HEK293 (cell line): ENCODE measurements at regions of chr12 and their contacts with region 1.

Region 1: GRCh38 chr12:117367011-117367638 is 5.7 kb upstream of the NOS1 start:
- H3K4me3 ChIP-seq: no peak overlapping the region
- H3K27ac ChIP-seq: no peak overlapping the region
- H3K4me1 ChIP-seq: no peaks in the 10 kb centered on the region
- CTCF ChIP-seq: peak; percentile 60

Region 2: DNA sequence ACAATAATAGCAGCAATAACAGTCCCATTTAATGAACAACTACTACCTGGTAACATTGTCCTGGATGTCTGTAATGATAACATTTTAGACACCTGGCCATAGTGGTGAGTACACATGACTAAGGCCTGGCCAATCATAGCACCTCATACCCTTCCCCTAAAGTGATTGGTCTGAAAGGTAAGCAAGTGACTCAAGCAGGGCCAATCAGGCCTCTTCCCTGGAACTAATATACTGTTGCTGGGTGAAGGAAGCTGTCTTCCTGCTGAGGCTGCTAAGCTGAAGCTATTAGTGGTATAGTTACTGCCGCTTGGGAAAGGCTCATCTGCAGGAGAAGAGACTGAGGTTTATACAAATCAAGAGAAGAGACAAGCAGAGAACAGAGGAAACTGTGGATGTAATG is 13.0 kb after region 1 on chr12:
- CTCF ChIA-PET with region 1: interaction called, 10 read pairs
- POLR2A ChIA-PET with region 1: no interaction called
- H3K4me3 ChIP-seq: no peak overlapping the region
- H3K27ac ChIP-seq: no peak overlapping the region
- H3K4me1 ChIP-seq: no peaks in the 10 kb centered on the region
- CTCF ChIP-seq: no peak

Region 3: GRCh38 chr12:117671734-117672133 is 304.6 kb after region 1 on chr12:
- CTCF ChIA-PET with region 1: interaction called, 16 read pairs
- POLR2A ChIA-PET with region 1: no interaction called
- H3K4me3 ChIP-seq: no peak overlapping the region
- H3K27ac ChIP-seq: no peak overlapping the region
- H3K4me1 ChIP-seq: peaks cover 2% of the 10 kb centered on the region; the same call in 1 of the 2 replicates
- CTCF ChIP-seq: no peak; the same call in 1 of the 2 replicates

Region 4: DNA sequence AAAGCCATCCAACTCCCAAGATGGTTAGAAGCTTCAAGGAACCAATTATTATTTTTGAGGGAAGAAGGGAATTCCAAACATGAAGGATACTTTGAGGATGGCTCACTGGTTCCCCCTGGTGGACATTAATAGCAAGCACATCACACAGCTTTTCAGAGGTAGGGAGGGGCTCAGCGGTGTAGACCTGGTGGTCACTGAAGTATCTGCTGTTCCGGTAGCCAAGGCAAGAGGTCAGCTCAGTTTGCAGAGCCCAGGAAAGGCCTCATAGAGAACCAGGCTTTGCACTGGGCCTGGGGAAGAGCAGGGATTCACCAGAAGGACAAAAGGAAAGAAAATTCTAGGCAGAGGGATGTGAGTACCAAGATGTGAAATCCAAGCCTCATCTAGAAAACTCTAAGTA is 482.9 kb after region 1 on chr12:
- CTCF ChIA-PET with region 1: interaction called, 69 read pairs
- POLR2A ChIA-PET with region 1: no interaction called
- H3K4me3 ChIP-seq: no peak overlapping the region
- H3K27ac ChIP-seq: no peak overlapping the region
- H3K4me1 ChIP-seq: no peaks in the 10 kb centered on the region
- CTCF ChIP-seq: peak; percentile 45; the same call in 1 of the 2 replicates